Naive thymus-derived CD8-positive, alpha-beta T cell (primary cell): ENCODE measurements at regions of chr2 and their contacts with region 1.

Region 1: GRCh38 chr2:86440631-86441391 is at the start of gene KDM3A:
- DNase-seq: peak; percentile 97 to 100 (median 99)
- ATAC-seq: peak; percentile 82
- H3K4me3 Mint-ChIP-seq: peak within 1 kb of the TSS; percentile 92 to 99 (median 98)
- H3K27ac Mint-ChIP-seq: peak within 1 kb of the TSS; percentile 98 to 100 (median 99)
- H3K4me1 Mint-ChIP-seq: peaks cover 29 to 53% (median 46%) of the 10 kb centered on the region in 4 donors
- H3K27me3 Mint-ChIP-seq: peaks cover 0 to 1% (median 0%) of the 10 kb centered on the region in 5 donors
- polyA plus RNA-seq, gene KDM3A: 12.6 to 30.4 (median 17.5) TPM

Region 2: GRCh38 chr2:86105252-86105968 is 335.4 kb before region 1 on chr2 and contains the start of gene POLR1A:
- POLR2A ChIA-PET with region 1: interaction called, 24 read pairs
- DNase-seq: peak in 9 of 10 donors; percentile 61 to 90 (median 79)
- ATAC-seq: peak; percentile 79
- H3K4me3 Mint-ChIP-seq: peak within 1 kb of the TSS; percentile 85 to 96 (median 91)
- H3K27ac Mint-ChIP-seq: peak within 1 kb of the TSS; percentile 94 to 100 (median 98)
- H3K4me1 Mint-ChIP-seq: peaks cover 36 to 72% (median 67%) of the 10 kb centered on the region in 4 donors
- H3K27me3 Mint-ChIP-seq: no peaks in the 10 kb centered on the region
- polyA plus RNA-seq, gene POLR1A: 1.1 to 5.7 (median 3.0) TPM

Region 3: GRCh38 chr2:86337244-86337836 is 103.5 kb before region 1 on chr2 and contains the start of gene REEP1:
- POLR2A ChIA-PET with region 1: interaction called, 11 read pairs
- DNase-seq: peak in 4 of 10 donors; percentile 12 to 26 (median 20)
- ATAC-seq: peak; percentile 78 to 81
- H3K4me3 Mint-ChIP-seq: peak within 1 kb of the TSS; percentile 70 to 88 (median 82)
- H3K27ac Mint-ChIP-seq: peak within 1 kb of the TSS in 1 of 10 donors; percentile 13
- H3K4me1 Mint-ChIP-seq: peaks cover 8 to 20% (median 17%) of the 10 kb centered on the region in 4 donors
- H3K27me3 Mint-ChIP-seq: peaks cover 39 to 71% (median 54%) of the 10 kb centered on the region in 5 donors
- polyA plus RNA-seq, gene REEP1: not detected

Region 4: GRCh38 chr2:86453836-86454235 is 13.0 kb after region 1 on chr2:
- POLR2A ChIA-PET with region 1: interaction called, 24 read pairs
- DNase-seq: no peak
- ATAC-seq: no peak
- H3K4me3 Mint-ChIP-seq: no peak overlapping the region
- H3K27ac Mint-ChIP-seq: peak overlapping the region in 1 of 10 donors; percentile 8
- H3K4me1 Mint-ChIP-seq: peaks cover 20 to 42% (median 28%) of the 10 kb centered on the region in 4 donors
- H3K27me3 Mint-ChIP-seq: no peaks in the 10 kb centered on the region

Region 5: GRCh38 chr2:86623651-86624541 is 183.1 kb after region 1 on chr2 and contains the start of gene RNF103:
- POLR2A ChIA-PET with region 1: interaction called, 24 read pairs
- DNase-seq: peak; percentile 86 to 94 (median 88)
- ATAC-seq: peak; percentile 83 to 87
- H3K4me3 Mint-ChIP-seq: peak within 1 kb of the TSS; percentile 85 to 95 (median 92)
- H3K27ac Mint-ChIP-seq: peak within 1 kb of the TSS; percentile 88 to 96 (median 96)
- H3K4me1 Mint-ChIP-seq: peaks cover 10 to 40% (median 32%) of the 10 kb centered on the region in 4 donors
- H3K27me3 Mint-ChIP-seq: peaks cover 0 to 1% (median 0%) of the 10 kb centered on the region in 5 donors
- polyA plus RNA-seq, gene RNF103: 0.77 to 4.4 (median 2.4) TPM